Thyroid gland (tissue), 4 donors: ENCODE measurements at regions of chr16 and their contacts with region 1.

Region 1: GRCh38 chr16:3282730-3283524 is at the start of gene ZNF263:
- DNase-seq: peak; percentile 95 to 96
- H3K4me3 ChIP-seq: peak within 1 kb of the TSS; percentile 86 to 98 (median 91)
- H3K27ac ChIP-seq: peak within 1 kb of the TSS; percentile 94 to 99 (median 97)
- H3K4me1 ChIP-seq: peaks cover 14 to 21% of the 10 kb centered on the region in 2 donors
- H3K27me3 ChIP-seq: no peaks in the 10 kb centered on the region
- CTCF ChIP-seq: peak in 1 of 6 experiments; percentile 5
- POLR2A ChIP-seq: peak; percentile 36 to 63
- total RNA-seq, gene ZNF263: 44.6 to 62.2 (median 60.6) TPM

Region 2: DNA sequence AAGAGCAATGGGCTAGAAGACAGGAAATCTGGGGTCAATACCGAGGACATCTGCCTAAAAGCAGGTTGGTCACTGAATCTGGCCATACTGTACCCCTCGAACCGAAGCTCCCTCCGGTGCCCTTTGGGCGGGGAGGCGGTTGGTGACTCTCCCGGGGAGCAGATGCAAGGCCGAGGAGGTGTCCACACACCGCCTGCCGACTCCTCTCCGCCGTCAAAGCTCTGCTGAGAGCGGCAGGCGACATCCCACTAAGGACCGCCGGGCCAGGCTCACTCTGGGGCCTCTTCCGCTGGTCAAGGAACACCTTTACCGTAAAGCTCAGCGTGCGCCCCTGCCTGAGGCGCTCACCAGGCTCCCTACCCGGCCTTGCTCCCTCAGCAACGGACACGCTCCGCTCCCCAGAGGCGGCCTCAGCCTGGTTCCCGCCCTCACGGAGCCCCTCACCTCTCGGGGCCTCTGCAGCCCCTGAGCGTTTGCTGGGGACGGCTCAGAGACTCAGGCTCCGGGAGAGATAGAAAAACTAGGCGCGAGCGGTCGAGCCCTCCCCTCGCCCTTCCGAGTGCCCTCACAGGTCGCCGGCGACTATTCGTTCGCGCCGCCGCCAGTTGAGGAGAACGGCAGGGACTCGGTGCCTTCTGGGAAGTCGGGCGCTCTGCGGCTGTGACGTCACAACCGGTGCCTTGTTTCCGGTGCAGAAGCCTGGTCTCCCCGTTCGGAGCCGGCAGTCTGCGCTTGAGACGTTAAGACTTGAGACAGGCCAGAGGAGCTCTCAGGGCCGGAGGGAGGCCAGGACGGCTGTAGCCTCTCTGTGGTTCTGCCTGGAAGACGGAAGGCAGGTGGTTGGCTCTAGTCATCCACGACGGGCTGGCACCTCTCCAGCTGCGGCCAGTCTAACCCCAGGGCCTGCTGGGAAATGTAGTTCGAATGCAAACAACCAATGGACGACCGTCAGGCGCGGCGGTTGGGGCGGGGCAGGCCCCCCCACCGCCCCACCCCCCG is 48.1 kb before region 1 on chr16 and contains the start of gene ZNF200:
- intact Hi-C with region 1: loop called (anchors 10 kb)
- DNase-seq: peak; percentile 96 to 97
- H3K4me3 ChIP-seq: peak within 1 kb of the TSS; percentile 34 to 93 (median 63)
- H3K27ac ChIP-seq: peak within 1 kb of the TSS; percentile 86 to 93 (median 92)
- H3K4me1 ChIP-seq: peaks cover 8 to 11% of the 10 kb centered on the region in 2 donors
- H3K27me3 ChIP-seq: no peaks in the 10 kb centered on the region
- CTCF ChIP-seq: peak in 1 of 6 experiments; percentile 24
- POLR2A ChIP-seq: peak in 1 of 2 donors; percentile 49
- total RNA-seq, gene ZNF200: 6.4 to 10.8 (median 9.4) TPM

Region 3: GRCh38 chr16:3389663-3390338 is 106.9 kb after region 1 on chr16:
- intact Hi-C with region 1: no loop called
- DNase-seq: peak in 1 of 2 donors; percentile 6
- H3K4me3 ChIP-seq: no peak overlapping the region
- H3K27ac ChIP-seq: no peak overlapping the region
- H3K4me1 ChIP-seq: no peaks in the 10 kb centered on the region
- H3K27me3 ChIP-seq: no peaks in the 10 kb centered on the region
- CTCF ChIP-seq: no peak
- POLR2A ChIP-seq: no peak

Region 4: DNA sequence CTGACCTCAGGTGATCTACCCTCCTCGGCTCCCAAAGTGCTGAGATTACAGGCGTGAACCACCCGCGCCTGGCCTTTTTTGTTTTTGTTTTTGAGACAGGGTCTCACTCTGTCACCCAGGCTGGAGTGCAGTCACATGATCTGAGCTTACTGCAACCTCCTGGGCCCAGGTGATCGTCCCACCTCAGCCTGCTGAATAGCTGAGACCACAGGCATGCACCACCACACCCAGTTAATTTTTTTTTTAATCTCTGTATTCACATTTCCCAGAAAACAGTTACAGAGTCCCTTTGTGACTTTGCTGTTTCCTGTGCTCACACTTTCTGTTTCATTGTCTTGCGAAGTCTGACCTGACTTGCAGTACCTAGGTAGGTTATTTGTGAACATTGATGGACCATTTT is 220.6 kb after region 1 on chr16:
- intact Hi-C with region 1: loop called (anchors 5 kb)
- DNase-seq: no peak
- H3K4me3 ChIP-seq: no peak overlapping the region
- H3K27ac ChIP-seq: no peak overlapping the region
- H3K4me1 ChIP-seq: peaks cover 11 to 16% of the 10 kb centered on the region in 2 donors
- H3K27me3 ChIP-seq: no peaks in the 10 kb centered on the region
- CTCF ChIP-seq: no peak
- POLR2A ChIP-seq: no peak